ENCODE measurements at regions of chr20 and their contacts with region 1.

Region 1: GRCh38 chr20:36969478-36970186 is 18.1 kb upstream of the SAMHD1 start:
- DNase-seq: peak in 6 of 10 donors; percentile 22 to 69 (median 40)
- ATAC-seq: peak; percentile 69 to 71
- H3K4me3 Mint-ChIP-seq: peak overlapping the region; percentile 26 to 83 (median 72)
- H3K27ac Mint-ChIP-seq: peak overlapping the region; percentile 93 to 99 (median 96)
- H3K4me1 Mint-ChIP-seq: peaks cover 35 to 77% (median 65%) of the 10 kb centered on the region in 4 donors
- H3K27me3 Mint-ChIP-seq: no peaks in the 10 kb centered on the region

Region 2: GRCh38 chr20:36951198-36951976 is 18.2 kb before region 1 on chr20 and contains the start of gene SAMHD1:
- POLR2A ChIA-PET with region 1: interaction called, 41 read pairs
- DNase-seq: peak; percentile 66 to 90 (median 82)
- ATAC-seq: peak; percentile 71 to 76
- H3K4me3 Mint-ChIP-seq: peak within 1 kb of the TSS; percentile 88 to 100 (median 97)
- H3K27ac Mint-ChIP-seq: peak within 1 kb of the TSS; percentile 94 to 99 (median 98)
- H3K4me1 Mint-ChIP-seq: peaks cover 17 to 62% (median 47%) of the 10 kb centered on the region in 4 donors
- H3K27me3 Mint-ChIP-seq: no peaks in the 10 kb centered on the region
- polyA plus RNA-seq, gene SAMHD1: 212 to 247 (median 219) TPM

Region 3: DNA sequence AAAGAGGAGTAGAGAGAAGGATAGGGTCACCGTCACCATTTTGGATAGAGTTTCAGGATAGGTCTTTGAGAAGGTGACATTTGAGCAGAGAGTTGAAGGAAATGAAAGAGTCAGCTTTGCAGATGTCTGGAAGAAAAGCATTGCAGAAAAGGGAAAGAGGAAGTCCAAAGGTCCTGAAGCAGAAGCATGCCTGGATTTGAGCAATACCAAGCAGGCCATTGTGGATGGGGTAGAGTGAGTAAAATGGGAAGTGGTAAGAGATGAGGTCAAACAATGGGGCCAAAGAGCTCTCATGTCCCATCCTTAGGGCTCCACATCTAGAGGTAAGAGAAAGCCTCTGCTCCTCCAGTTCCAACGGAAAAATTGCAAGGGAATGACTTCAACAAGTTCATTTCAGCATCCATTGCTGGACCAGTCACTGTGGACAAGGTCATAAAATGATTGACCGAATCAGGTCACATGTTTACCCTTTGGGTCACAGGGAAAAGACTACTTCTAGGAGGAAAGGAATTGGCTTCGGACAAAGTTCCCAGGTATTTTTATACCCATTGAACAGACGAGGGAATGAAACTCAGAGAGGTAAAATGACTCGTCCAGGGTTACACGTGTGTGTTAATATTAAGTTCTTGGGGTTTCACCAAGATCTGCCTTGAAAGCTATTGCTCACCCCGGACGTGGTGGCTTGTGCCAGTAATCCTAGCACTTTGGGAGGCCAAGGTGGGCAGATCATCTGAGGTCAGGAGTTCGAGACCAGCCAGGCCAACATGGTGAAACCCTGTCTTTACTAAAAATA is 11.6 kb before region 1 on chr20:
- POLR2A ChIA-PET with region 1: interaction called, 19 read pairs
- DNase-seq: no peak
- ATAC-seq: no peak
- H3K4me3 Mint-ChIP-seq: no peak overlapping the region
- H3K27ac Mint-ChIP-seq: peak overlapping the region in 7 of 10 donors; percentile 2 to 76 (median 44)
- H3K4me1 Mint-ChIP-seq: peaks cover 17 to 54% (median 34%) of the 10 kb centered on the region in 4 donors
- H3K27me3 Mint-ChIP-seq: no peaks in the 10 kb centered on the region

Measured in naive thymus-derived CD8-positive, alpha-beta T cell (primary cell).